Posterior vena cava (tissue), 2 donors: ENCODE measurements at regions of chr7 and their contacts with region 1.

Region 1: GRCh38 chr7:6589829-6590644 is at the start of gene INTS15:
- DNase-seq: peak; percentile 91
- total RNA-seq, gene INTS15: 16.0 to 20.6 TPM

Region 2: DNA sequence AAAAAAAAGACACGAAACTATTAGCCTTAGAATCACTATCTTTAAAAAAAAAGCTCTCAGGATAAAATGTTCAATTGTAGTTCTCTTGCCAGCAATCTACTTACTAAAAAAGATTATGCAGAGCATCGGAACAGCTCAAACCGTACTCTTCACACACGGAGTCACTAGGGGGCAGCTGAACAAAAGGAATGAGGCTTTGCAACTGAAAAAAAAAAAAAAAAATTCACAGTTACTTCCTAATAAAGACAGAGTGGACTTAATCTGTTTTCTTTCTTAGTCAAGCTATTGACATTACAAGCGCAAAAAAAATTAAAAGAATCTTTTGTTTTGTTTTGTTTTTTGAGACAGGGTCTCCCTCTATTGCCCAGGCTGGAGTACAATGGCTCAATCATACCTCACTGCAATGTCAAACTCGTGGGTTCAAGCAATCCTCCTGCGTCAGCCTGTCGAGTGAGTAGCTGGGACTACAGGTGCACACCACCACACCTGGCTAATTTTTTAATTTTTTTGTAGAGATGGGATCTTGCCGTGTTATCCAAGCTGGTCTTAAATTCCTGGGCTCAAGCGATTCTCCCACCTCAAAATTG is 592.7 kb before region 1 on chr7:
- intact Hi-C with region 1: loop called in 1 of 2 experiments (anchors 5 kb)
- DNase-seq: no peak

Region 3: DNA sequence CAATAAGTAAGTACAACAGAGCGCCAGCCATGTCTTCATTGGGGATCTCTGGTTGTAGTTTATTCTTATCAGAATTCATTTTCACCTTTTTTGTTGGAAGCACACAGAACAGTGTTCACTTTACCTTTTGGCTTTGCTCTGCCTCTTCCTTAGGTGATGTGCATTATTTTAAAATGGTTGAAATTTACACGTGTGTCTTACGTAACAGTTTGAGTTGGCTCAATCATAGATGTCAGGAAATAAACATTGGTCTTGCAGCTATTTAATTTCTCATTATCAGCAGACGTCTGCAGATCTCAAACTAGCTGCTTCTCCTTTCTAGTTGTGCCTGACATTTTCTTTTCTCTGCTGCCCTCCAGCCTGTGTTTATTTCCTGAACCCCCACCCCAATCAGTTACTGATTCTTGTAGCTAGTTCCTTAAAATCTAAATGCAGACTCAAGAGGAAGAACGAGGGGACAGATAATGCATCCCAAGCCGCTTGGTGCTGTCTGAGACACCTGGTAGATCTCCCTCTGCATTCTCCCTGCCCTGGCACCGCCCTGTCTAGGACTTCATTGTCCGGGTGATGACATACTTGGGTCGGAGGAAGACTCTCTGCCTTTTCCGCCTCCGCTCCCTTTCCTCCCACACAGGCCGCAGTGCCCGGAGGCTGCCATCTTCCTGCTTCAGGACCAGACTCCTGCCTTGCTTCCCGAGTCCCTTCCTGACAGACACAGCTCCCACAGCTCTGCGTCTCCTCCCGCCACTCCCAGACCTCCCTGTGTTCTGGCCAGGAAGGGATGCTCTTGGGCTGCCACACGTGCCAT is 450.6 kb before region 1 on chr7:
- intact Hi-C with region 1: loop called in 1 of 2 experiments (anchors 5 kb)
- DNase-seq: peak; percentile 75

Region 4: DNA sequence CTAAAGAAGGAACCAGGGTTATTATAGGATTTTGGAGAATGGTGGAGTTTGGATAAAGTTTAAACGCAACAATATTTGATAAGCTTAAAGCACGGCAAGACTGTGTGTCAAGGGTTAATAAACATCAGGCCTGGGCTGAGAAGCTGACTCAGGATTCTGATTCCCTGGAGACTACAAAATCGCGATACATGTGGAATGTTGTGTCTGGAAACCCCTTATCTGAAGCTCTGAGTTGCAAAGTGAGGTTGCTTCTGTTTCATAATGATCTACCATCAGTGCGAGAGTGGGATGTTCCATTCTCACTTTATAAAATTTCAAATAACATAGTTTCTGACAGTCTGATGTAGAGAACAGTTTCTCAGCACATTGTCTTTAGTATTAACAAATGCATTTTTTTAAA is 600.1 kb after region 1 on chr7:
- intact Hi-C with region 1: loop called in 1 of 2 experiments (anchors 5 kb)
- DNase-seq: no peak